ENCODE measurements at regions of chr6 and their contacts with region 1.

Region 1: DNA sequence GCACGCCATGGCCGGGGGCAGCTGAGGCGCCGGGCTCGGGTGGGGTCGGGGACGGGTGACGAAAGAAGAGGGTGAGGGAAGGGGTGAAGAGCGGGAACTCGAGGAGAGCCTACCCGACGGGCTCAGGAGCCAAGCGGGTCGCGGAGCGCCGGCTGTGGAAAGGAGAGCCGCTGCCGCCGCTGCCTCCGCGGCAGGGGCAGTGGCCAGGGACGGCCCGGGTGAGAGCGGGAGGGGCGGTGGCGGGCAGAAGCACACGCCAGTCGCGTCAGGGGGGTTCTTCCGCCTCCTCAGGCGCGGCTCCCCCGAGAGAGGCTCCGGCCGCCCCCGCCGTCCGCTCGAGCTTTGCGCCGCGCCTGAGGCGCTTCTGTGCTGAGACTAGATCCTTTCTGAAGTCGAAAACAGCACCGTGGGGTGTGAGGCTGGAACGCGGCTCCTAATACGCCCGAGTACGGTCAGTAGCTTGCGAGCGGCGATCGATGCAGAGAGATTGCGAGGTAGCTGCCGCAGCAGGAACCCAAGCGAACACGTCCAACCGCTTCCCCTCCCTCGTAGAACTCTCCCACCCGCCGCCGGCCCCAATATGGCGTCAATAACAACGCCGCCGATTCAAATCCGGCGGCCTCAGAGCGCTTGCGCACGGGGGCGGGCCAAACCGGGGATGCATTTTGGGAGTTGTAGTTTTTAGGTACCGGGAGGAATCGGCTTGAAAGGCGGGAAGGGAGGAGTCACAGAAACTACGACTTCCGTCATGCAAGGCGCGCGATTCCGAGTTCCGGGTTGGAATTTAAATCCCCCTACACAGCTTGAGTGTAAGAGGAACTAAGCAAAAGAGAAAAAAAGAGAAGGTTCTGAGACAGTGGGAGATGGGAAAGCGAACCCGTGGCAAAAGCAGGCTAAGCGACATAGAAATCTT is at the start of gene AKIRIN2:
- DNase-seq: peak; percentile 97
- ATAC-seq: peak; percentile 78
- H3K4me3 Mint-ChIP-seq: peak within 1 kb of the TSS; percentile 97
- H3K27ac Mint-ChIP-seq: peak within 1 kb of the TSS; percentile 97
- H3K4me1 Mint-ChIP-seq: peaks cover 53% of the 10 kb centered on the region
- H3K27me3 Mint-ChIP-seq: no peaks in the 10 kb centered on the region
- CTCF ChIP-seq: no peak
- total RNA-seq, gene AKIRIN2: 61.9 and 76.4 TPM in 2 replicates

Region 2: DNA sequence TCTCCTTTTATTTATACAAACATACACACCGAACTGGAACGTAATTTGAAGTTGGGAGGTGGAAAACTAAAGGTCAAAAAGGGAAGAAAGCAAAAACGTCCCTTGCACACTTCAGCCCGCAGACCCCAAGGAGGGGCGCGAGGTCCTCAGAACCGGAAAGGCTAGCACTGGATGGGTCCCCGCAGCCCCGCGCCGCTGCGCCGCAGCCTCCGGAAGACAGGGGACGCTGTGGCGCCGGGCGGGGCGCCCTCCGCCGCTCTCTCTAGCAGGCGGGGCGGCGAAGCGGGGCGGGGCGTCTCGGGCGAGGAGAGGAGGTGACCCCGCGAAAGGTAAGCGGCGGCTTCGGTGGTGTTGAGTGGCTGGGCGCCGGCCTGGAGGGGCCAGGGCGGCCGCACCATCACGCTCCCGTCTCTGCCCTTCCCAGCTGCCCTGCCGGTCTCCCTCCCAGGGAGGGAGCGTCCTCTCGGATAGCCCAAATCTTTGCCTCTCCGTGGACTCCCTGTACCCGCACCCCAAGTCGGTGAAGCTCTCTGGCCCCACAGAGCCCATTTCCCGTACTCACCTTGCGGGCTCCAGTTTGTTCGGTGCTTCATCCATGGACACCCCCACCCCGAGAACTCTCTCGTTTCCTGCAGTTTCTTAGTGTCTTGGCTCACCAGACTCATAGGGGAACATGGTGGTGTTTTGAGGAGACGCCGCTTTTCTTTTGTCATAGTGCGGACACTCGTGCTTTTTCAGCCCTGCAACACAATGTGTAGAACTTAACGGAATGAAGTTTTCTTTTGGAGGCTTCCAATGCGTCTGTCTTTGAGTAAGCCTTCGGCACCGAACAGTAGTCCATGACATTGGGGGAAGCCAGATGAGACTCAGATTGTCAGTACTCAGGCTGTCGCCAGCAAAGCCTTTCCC is 379.4 kb before region 1 on chr6 and contains the start of gene SMIM8:
- CTCF ChIA-PET with region 1: no interaction called
- POLR2A ChIA-PET with region 1: no interaction called
- intact Hi-C with region 1: loop called (anchors 5 kb)
- DNase-seq: peak; percentile 89
- ATAC-seq: peak; percentile 100
- H3K4me3 Mint-ChIP-seq: peak within 1 kb of the TSS; percentile 98
- H3K27ac Mint-ChIP-seq: peak within 1 kb of the TSS; percentile 90
- H3K4me1 Mint-ChIP-seq: peaks cover 25% of the 10 kb centered on the region
- H3K27me3 Mint-ChIP-seq: no peaks in the 10 kb centered on the region
- CTCF ChIP-seq: peak; percentile 79
- total RNA-seq, gene SMIM8: 11.1 and 14.4 TPM in 2 replicates

Region 3: DNA sequence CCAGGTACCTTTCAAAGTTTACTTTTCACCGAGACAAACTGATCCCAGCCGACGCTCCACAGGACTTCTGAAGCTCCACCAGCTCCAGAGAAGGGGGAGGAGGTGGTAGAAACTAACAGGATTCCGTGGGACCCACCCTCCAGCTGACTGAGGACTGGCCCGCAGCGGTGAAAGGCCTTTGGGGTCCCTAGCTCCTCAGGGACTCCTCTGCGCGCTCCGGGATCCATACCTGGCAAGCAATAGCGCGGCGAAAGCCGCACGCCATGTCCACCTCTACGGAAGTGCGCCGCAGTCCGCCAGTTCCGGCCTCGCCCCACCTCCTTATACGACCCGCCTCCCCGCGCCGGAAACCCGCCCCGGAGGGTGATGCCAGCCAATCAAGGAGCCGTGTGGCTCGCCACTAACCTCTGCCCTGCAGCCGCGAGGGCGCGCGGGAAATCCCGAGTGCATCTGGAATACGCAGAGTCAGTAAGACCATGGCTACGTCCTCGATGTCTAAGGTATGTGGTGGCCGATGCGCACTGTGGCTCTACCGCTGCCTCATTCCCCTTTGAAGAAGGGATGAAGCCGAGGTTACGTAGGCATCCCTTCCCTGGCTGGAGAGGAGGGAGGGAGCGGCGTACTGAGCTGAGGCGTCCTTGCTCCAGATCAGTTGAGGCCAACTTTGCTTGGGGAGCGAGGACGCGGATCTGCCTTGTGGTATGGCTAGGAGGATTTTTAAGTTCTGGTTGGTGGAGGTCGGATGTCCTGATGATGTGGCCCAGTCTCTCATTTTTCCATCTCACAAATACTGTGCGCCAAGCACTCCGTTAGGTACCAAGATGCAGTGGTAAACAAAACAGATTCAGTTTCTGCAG is 112.0 kb before region 1 on chr6 and contains the starts of genes ORC3 and RARS2:
- CTCF ChIA-PET with region 1: no interaction called
- POLR2A ChIA-PET with region 1: interaction called, 15 read pairs
- intact Hi-C with region 1: loop called (anchors 1 kb)
- DNase-seq: peak; percentile 90
- ATAC-seq: peak; percentile 99
- H3K4me3 Mint-ChIP-seq: peak within 1 kb of the TSS; percentile 97
- H3K27ac Mint-ChIP-seq: peak within 1 kb of the TSS; percentile 88
- H3K4me1 Mint-ChIP-seq: peaks cover 50% of the 10 kb centered on the region
- H3K27me3 Mint-ChIP-seq: no peaks in the 10 kb centered on the region
- CTCF ChIP-seq: no peak
- total RNA-seq, gene ORC3: 24.6 and 27.7 TPM in 2 replicates
- total RNA-seq, gene RARS2: 24.8 and 27.0 TPM in 2 replicates

Region 4: DNA sequence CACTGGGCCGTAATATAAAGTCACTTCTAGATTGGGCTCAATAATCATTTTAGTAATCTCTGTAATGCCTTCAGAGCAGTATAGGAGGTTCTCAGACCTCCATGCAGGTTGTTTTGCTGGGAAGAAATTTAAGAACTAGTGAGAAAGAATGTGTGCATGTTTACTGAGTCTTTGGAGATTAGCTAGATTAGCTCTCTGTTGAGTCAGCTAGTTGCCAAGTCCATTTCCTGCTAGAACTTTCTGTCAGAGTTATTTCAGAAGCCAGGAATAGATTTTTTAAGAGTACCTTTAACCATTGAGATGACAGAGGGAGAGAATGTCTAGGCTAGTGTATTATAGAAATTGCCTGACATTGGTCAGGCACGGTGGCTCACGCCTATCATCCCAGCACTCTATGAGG is 78.7 kb before region 1 on chr6:
- CTCF ChIA-PET with region 1: no interaction called
- POLR2A ChIA-PET with region 1: no interaction called
- intact Hi-C with region 1: no loop called
- DNase-seq: no peak
- ATAC-seq: no peak
- H3K4me3 Mint-ChIP-seq: no peak overlapping the region
- H3K27ac Mint-ChIP-seq: no peak overlapping the region
- H3K4me1 Mint-ChIP-seq: no peaks in the 10 kb centered on the region
- H3K27me3 Mint-ChIP-seq: no peaks in the 10 kb centered on the region
- CTCF ChIP-seq: no peak

Region 5: DNA sequence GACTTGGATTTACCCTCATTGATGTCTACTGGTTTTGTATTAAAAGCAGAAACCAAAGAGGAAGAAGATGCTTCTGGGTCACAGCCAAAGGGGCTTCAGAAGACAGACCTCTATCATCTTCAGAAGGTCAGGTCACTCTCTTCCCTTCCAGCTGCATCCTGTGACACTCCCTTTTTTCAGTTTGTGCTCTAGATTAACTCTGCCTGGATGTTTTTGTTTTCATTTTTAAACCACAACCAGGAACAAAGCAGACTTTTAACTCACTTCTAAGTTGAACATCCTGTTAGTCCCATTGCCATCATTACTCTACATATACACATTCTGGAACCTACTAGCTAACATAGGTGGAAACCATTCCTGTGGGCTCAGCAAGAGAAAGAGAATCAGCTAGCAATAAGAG is 45.1 kb before region 1 on chr6:
- CTCF ChIA-PET with region 1: no interaction called
- POLR2A ChIA-PET with region 1: no interaction called
- intact Hi-C with region 1: no loop called
- DNase-seq: no peak
- ATAC-seq: no peak
- H3K4me3 Mint-ChIP-seq: no peak overlapping the region
- H3K27ac Mint-ChIP-seq: no peak overlapping the region
- H3K4me1 Mint-ChIP-seq: peaks cover 13% of the 10 kb centered on the region
- H3K27me3 Mint-ChIP-seq: no peaks in the 10 kb centered on the region
- CTCF ChIP-seq: no peak

Region 6: GRCh38 chr6:87756858-87757257 is 54.9 kb after region 1 on chr6:
- CTCF ChIA-PET with region 1: interaction called, 4 read pairs
- POLR2A ChIA-PET with region 1: interaction called, 62 read pairs
- intact Hi-C with region 1: loop called (anchors 1 kb)
- DNase-seq: peak; percentile 41
- ATAC-seq: peak; percentile 91
- H3K4me3 Mint-ChIP-seq: peak overlapping the region; percentile 46
- H3K27ac Mint-ChIP-seq: peak overlapping the region; percentile 91
- H3K4me1 Mint-ChIP-seq: peaks cover 42% of the 10 kb centered on the region
- H3K27me3 Mint-ChIP-seq: no peaks in the 10 kb centered on the region
- CTCF ChIP-seq: no peak

Region 7: DNA sequence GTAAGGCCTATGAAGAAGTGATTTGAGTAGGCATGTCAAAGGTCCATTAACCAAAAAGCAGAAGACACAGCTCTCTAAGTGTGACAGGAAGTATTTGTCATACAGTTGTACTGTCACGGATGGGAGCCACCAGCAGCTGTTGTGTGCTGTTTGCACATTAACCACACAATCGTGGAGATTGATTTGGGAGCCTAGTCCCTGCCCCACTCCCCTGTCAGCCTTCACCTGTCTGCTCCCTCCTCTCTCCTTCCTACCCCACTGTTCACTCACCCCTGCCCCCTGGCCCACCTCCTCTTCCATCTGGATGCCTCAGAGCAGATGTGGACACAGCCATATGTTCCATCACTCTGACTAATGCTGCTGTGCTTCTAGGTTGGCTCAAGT is 221.0 kb after region 1 on chr6:
- CTCF ChIA-PET with region 1: no interaction called
- POLR2A ChIA-PET with region 1: interaction called, 8 read pairs
- intact Hi-C with region 1: loop called (anchors 1 kb)
- DNase-seq: peak; percentile 39
- ATAC-seq: peak; percentile 81
- H3K4me3 Mint-ChIP-seq: peak overlapping the region; percentile 33
- H3K27ac Mint-ChIP-seq: peak overlapping the region; percentile 88
- H3K4me1 Mint-ChIP-seq: peaks cover 87% of the 10 kb centered on the region
- H3K27me3 Mint-ChIP-seq: no peaks in the 10 kb centered on the region
- CTCF ChIP-seq: no peak

Region 8: DNA sequence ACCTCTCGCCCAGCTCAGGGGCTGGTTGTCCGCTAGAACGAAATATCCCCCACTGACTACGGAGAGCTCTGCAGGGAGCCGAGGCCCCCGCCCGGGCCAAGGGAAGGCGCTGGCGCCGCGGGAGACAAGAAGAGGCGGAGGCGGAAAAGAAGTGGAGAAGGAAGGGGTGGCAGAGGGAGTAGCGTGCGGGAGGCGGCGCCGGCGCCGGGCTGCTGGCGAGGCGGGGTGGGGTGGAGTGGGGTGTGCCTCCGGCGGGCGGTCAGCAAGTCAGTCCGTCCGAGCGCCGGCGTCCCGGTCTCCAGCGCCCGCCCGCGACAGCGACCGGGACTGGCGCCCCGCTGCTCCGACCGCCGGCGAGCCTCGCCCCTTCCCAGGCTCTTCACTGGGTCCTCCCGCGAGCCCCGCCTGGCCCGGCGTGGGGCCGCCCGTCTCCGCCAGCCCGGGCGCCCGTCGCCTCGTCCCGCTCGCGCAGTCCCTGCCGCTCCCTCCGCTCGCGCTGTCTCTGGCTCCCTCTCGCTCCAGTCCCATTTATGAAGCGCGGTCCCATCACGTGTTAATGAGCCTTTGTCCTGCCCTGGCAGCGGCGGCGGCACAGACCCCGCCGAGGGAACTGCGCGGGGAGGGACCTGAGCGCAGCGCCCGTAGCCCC is 464.0 kb after region 1 on chr6 and contains the start of gene CNR1:
- CTCF ChIA-PET with region 1: no interaction called
- POLR2A ChIA-PET with region 1: no interaction called
- intact Hi-C with region 1: loop called (anchors 2 kb)
- DNase-seq: no peak
- ATAC-seq: peak; percentile 59
- H3K4me3 Mint-ChIP-seq: peak within 1 kb of the TSS; percentile 91
- H3K27ac Mint-ChIP-seq: peak within 1 kb of the TSS; percentile 87
- H3K4me1 Mint-ChIP-seq: peaks cover 34% of the 10 kb centered on the region
- H3K27me3 Mint-ChIP-seq: peaks cover 15% of the 10 kb centered on the region
- CTCF ChIP-seq: no peak
- total RNA-seq, gene CNR1: 2.7 and 4.4 TPM in 2 replicates

Region 9: DNA sequence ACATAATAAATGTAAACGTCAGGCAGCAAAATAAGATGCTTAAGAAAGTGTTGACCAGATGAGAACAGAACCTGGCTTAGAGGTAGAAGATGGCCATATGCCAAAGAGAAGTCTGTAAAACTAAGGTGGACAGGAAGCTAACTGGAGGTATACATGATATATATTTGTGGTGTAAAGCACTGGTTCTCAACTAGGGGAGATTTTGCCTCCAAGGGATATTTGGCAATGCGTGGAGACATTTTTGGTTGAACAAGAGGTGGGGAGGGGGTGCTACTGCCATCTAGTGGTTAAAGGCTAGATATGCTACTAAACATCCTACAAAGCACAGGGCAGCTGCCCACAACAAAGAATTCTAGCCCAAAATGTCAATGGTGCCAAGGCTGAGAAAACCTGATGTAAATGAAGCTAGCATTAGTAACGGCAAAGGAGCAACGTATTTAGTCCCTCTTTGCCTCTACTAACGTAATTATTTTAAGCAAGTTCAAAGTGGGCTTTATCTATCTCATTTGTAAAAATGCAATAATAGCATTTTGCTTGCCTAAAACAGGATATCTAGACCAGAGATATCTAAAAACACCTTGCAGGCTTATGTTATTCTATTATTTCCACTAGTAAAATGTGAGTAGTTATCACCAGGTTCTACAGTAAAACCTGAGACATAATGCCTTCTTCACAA is 1078.9 kb after region 1 on chr6:
- CTCF ChIA-PET with region 1: no interaction called
- POLR2A ChIA-PET with region 1: no interaction called
- intact Hi-C with region 1: loop called (anchors 1 kb)
- DNase-seq: no peak
- ATAC-seq: peak; percentile 83
- H3K4me3 Mint-ChIP-seq: no peak overlapping the region
- H3K27ac Mint-ChIP-seq: no peak overlapping the region
- H3K4me1 Mint-ChIP-seq: peaks cover 16% of the 10 kb centered on the region
- H3K27me3 Mint-ChIP-seq: no peaks in the 10 kb centered on the region
- CTCF ChIP-seq: no peak

Measured in activated B cell treated with CpG ODN at 0.5 μM for 24 hours (primary cell).